ENCODE measurements at regions of chr6 and their contacts with region 1.

Region 1: DNA sequence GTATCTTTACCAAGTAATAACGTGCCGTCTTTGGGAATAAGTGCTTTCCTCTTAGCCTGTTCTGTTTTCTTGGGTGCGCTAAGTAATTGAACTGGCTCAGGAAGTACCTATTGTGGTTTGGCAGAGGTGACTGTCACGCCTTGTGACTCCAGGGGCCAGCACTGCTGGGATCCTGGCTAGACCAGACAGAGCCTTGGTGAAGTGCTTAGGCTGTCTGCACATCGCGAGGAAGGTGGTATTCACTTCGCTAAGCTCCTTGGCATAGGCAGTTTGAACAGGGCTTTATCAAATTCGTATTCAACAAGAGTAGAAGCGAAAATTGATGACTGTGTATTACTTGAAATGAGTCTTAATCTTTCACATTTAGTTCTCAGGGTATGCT is 17.6 kb downstream of the PRDM1 start:
- DNase-seq: no peak
- ATAC-seq: peak; percentile 56
- H3K4me3 ChIP-seq: 0 out of 2 replicates have a peak overlapping the region, but pooled peaks have one; percentile 6
- H3K27ac ChIP-seq: 0 out of 2 replicates have a peak overlapping the region, but pooled peaks have one; percentile 15
- H3K4me1 ChIP-seq: peaks cover 46% of the 10 kb centered on the region
- H3K27me3 ChIP-seq: no peaks in the 10 kb centered on the region; a peak in 1 of 4 replicates
- CTCF ChIP-seq: no peak
- EP300 ChIP-seq: no peak
- POLR2A ChIP-seq: no peak
- RAD21 ChIP-seq: no peak

Region 2: GRCh38 chr6:106063448-106063850 is 40.3 kb before region 1 on chr6:
- CTCF ChIA-PET with region 1: no interaction called
- POLR2A ChIA-PET with region 1: no interaction called
- RAD21 ChIA-PET with region 1: no interaction called
- SMC1A ChIA-PET with region 1: no interaction called
- in situ Hi-C with region 1: no loop called
- intact Hi-C with region 1: no loop called
- DNase-seq: no peak
- ATAC-seq: no peak
- H3K4me3 ChIP-seq: no peak overlapping the region
- H3K27ac ChIP-seq: no peak overlapping the region
- H3K4me1 ChIP-seq: no peaks in the 10 kb centered on the region
- H3K27me3 ChIP-seq: peaks cover 0 to 7% of the 10 kb centered on the region in 2 experiments; a peak in 2 of 4 replicates
- CTCF ChIP-seq: no peak
- EP300 ChIP-seq: no peak
- POLR2A ChIP-seq: no peak
- RAD21 ChIP-seq: no peak

Region 3: GRCh38 chr6:106125925-106126435 is 22.3 kb after region 1 on chr6:
- CTCF ChIA-PET with region 1: no interaction called
- POLR2A ChIA-PET with region 1: interaction called, 4 read pairs
- RAD21 ChIA-PET with region 1: interaction called, 3 read pairs
- SMC1A ChIA-PET with region 1: interaction called, 7 read pairs
- in situ Hi-C with region 1: no loop called
- intact Hi-C with region 1: loop called (anchors 1 kb)
- DNase-seq: peak; percentile 62
- ATAC-seq: peak; percentile 75
- H3K4me3 ChIP-seq: peak overlapping the region; percentile 38; the same call in 1 of the 2 replicates
- H3K27ac ChIP-seq: peak overlapping the region; percentile 55
- H3K4me1 ChIP-seq: peaks cover 46% of the 10 kb centered on the region
- H3K27me3 ChIP-seq: peaks cover 0 to 2% of the 10 kb centered on the region in 2 experiments; a peak in 1 of 4 replicates
- CTCF ChIP-seq: no peak
- EP300 ChIP-seq: no peak
- POLR2A ChIP-seq: no peak
- RAD21 ChIP-seq: no peak

Region 4: GRCh38 chr6:106187424-106187982 is 83.8 kb after region 1 on chr6:
- CTCF ChIA-PET with region 1: interaction called, 4 read pairs
- POLR2A ChIA-PET with region 1: interaction called, 3 read pairs
- RAD21 ChIA-PET with region 1: interaction called, 15 read pairs
- SMC1A ChIA-PET with region 1: interaction called, 33 read pairs
- in situ Hi-C with region 1: no loop called
- intact Hi-C with region 1: loop called (anchors 1 kb)
- DNase-seq: no peak
- ATAC-seq: peak; percentile 28; the same call in 1 of the 3 replicates
- H3K4me3 ChIP-seq: no peak overlapping the region
- H3K27ac ChIP-seq: peak overlapping the region; percentile 56; the same call in 1 of the 2 replicates
- H3K4me1 ChIP-seq: peaks cover 28% of the 10 kb centered on the region
- H3K27me3 ChIP-seq: no peaks in the 10 kb centered on the region
- CTCF ChIP-seq: no peak
- EP300 ChIP-seq: no peak
- POLR2A ChIP-seq: no peak
- RAD21 ChIP-seq: no peak

Measured in GM12878 (cell line).